CD4-positive, alpha-beta memory T cell (primary cell): ENCODE measurements at regions of chr6 and their contacts with region 1.

Region 1: GRCh38 chr6:119129148-119129967 is 50.9 kb upstream of the FAM184A start:
- DNase-seq: peak in 4 of 5 donors; percentile 48 to 63 (median 54)
- H3K4me3 ChIP-seq: no peak overlapping the region
- H3K4me3 Mint-ChIP-seq: no peak overlapping the region
- H3K27ac ChIP-seq: no peak overlapping the region
- H3K27ac Mint-ChIP-seq: no peak overlapping the region
- H3K4me1 ChIP-seq: peaks cover 4% of the 10 kb centered on the region
- H3K4me1 Mint-ChIP-seq: peaks cover 0 to 3% (median 2%) of the 10 kb centered on the region in 4 donors
- H3K27me3 ChIP-seq: no peaks in the 10 kb centered on the region
- H3K27me3 Mint-ChIP-seq: no peaks in the 10 kb centered on the region

Region 2: GRCh38 chr6:118660218-118660569 is 469.2 kb before region 1 on chr6:
- CTCF ChIA-PET with region 1: no interaction called
- POLR2A ChIA-PET with region 1: no interaction called
- intact Hi-C with region 1: no loop called
- DNase-seq: peak; percentile 67 to 82 (median 69)
- H3K4me3 ChIP-seq: no peak overlapping the region
- H3K4me3 Mint-ChIP-seq: peak overlapping the region in 6 of 8 donors; percentile 46 to 76 (median 55)
- H3K27ac ChIP-seq: no peak overlapping the region
- H3K27ac Mint-ChIP-seq: peak overlapping the region; percentile 68 to 89 (median 84)
- H3K4me1 ChIP-seq: peaks cover 59% of the 10 kb centered on the region
- H3K4me1 Mint-ChIP-seq: peaks cover 49 to 71% (median 59%) of the 10 kb centered on the region in 4 donors
- H3K27me3 ChIP-seq: no peaks in the 10 kb centered on the region
- H3K27me3 Mint-ChIP-seq: no peaks in the 10 kb centered on the region

Region 3: GRCh38 chr6:119172824-119173223 is 43.5 kb after region 1 on chr6:
- CTCF ChIA-PET with region 1: interaction called, 10 read pairs
- POLR2A ChIA-PET with region 1: no interaction called
- intact Hi-C with region 1: no loop called
- DNase-seq: no peak
- H3K4me3 ChIP-seq: no peak overlapping the region
- H3K4me3 Mint-ChIP-seq: no peak overlapping the region
- H3K27ac ChIP-seq: no peak overlapping the region
- H3K27ac Mint-ChIP-seq: no peak overlapping the region
- H3K4me1 ChIP-seq: no peaks in the 10 kb centered on the region
- H3K4me1 Mint-ChIP-seq: no peaks in the 10 kb centered on the region
- H3K27me3 ChIP-seq: no peaks in the 10 kb centered on the region
- H3K27me3 Mint-ChIP-seq: no peaks in the 10 kb centered on the region